Heart left ventricle (tissue), 16 donors: ENCODE measurements at regions of chr3 and their contacts with region 1.

Region 1: GRCh38 chr3:170117134-170117533 is 64.4 kb downstream of the PHC3 start:
- DNase-seq: no peak
- ATAC-seq: no peak
- H3K4me3 ChIP-seq: no peak overlapping the region
- H3K27ac ChIP-seq: no peak overlapping the region
- H3K4me1 ChIP-seq: no peaks in the 10 kb centered on the region
- H3K27me3 ChIP-seq: no peaks in the 10 kb centered on the region
- CTCF ChIP-seq: no peak
- POLR2A ChIP-seq: no peak

Region 2: GRCh38 chr3:170128977-170129431 is 11.9 kb after region 1 on chr3:
- intact Hi-C with region 1: loop called in 1 of 10 experiments (anchors 1 kb)
- DNase-seq: no peak
- ATAC-seq: peak in 3 of 4 donors; percentile 34 to 58 (median 34)
- H3K4me3 ChIP-seq: no peak overlapping the region
- H3K27ac ChIP-seq: no peak overlapping the region
- H3K4me1 ChIP-seq: peaks cover 0 to 13% (median 0%) of the 10 kb centered on the region in 12 donors
- H3K27me3 ChIP-seq: no peaks in the 10 kb centered on the region
- CTCF ChIP-seq: no peak
- POLR2A ChIP-seq: no peak

Region 3: DNA sequence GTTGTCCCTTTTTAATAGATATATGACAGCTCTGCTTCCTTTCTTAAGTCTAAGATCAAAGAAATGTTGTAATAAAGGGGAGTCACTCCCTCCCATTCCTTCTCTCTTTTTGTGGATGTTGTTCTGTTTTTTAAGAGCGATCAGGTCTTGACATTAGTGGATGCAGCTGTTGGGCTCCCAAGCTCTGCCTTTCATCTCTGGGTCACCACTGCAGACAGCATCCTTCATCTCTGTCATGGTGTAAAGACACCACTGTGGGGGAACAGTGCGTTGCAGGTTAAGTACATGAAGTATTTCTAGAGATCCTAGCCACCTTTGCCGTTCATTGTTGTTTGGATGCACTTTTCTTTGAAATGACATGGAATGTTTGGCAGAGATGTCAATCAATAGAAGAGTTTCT is 1939.9 kb after region 1 on chr3:
- intact Hi-C with region 1: no loop called
- DNase-seq: no peak
- ATAC-seq: no peak
- H3K4me3 ChIP-seq: no peak overlapping the region
- H3K27ac ChIP-seq: peak overlapping the region in 4 of 12 donors; percentile 4 to 38 (median 10)
- H3K4me1 ChIP-seq: peaks cover 16 to 96% (median 76%) of the 10 kb centered on the region in 12 donors
- H3K27me3 ChIP-seq: no peaks in the 10 kb centered on the region
- CTCF ChIP-seq: no peak
- POLR2A ChIP-seq: no peak